ENCODE measurements at regions of chr14 and their contacts with region 1.

Region 1: DNA sequence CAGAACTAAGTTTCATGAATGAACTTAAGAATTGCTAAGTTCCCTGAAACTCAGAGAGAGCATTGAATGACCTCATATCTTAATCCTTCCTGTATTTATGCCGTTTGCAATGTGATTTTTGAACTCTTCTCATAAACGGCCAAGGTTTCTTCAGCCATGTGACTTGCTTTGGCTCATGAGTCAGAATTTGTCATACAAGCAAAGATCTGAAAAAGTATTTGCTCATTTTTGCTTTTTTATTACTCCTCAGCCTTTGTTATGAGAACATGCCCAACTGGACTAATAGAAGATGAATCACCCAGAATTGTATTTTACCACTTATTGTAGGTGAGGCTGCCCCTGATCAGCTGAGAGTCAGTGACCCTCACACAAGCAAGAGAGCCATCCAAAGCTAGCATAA is 693.8 kb downstream of the BCL11B start:
- DNase-seq: peak; percentile 94
- H3K4me3 ChIP-seq: no peak overlapping the region
- H3K27ac ChIP-seq: peak overlapping the region; percentile 92
- H3K4me1 ChIP-seq: peaks cover 22% of the 10 kb centered on the region
- H3K27me3 ChIP-seq: no peaks in the 10 kb centered on the region
- CTCF ChIP-seq: no peak

Region 2: GRCh38 chr14:98138666-98139065 is 439.5 kb before region 1 on chr14:
- CTCF ChIA-PET with region 1: no interaction called
- dilution Hi-C with region 1: no loop called
- in situ Hi-C with region 1: no loop called
- intact Hi-C with region 1: loop called (anchors 10 kb)
- DNase-seq: peak; percentile 25
- H3K4me3 ChIP-seq: no peak overlapping the region
- H3K27ac ChIP-seq: no peak overlapping the region
- H3K4me1 ChIP-seq: peaks cover 4% of the 10 kb centered on the region
- H3K27me3 ChIP-seq: no peaks in the 10 kb centered on the region
- CTCF ChIP-seq: peak; percentile 49 to 82

Region 3: DNA sequence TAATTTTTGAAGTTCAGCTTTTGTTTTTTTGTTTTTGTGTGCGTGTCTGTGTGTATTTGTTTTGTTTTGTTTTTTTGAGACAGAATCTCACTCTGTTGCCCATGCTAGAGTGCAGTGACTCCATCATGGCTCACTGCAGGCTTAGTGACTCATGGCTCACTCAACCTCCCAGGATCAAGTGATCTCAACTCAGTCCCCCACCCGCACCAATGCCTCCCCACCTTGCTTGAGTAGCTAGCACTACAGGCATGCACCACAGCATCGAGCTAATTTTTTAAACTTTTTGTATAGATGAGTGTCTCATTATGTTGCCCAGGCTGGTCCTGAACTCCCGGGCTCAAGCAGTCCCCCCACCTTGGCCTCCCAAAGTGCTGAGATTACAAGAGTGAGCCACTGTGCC is 287.6 kb before region 1 on chr14:
- CTCF ChIA-PET with region 1: no interaction called
- dilution Hi-C with region 1: no loop called
- in situ Hi-C with region 1: no loop called
- intact Hi-C with region 1: loop called (anchors 1 kb)
- DNase-seq: peak; percentile 75
- H3K4me3 ChIP-seq: no peak overlapping the region
- H3K27ac ChIP-seq: no peak overlapping the region
- H3K4me1 ChIP-seq: peaks cover 8% of the 10 kb centered on the region
- H3K27me3 ChIP-seq: no peaks in the 10 kb centered on the region
- CTCF ChIP-seq: no peak

Region 4: GRCh38 chr14:98494582-98494981 is 83.6 kb before region 1 on chr14:
- CTCF ChIA-PET with region 1: no interaction called
- dilution Hi-C with region 1: no loop called
- in situ Hi-C with region 1: no loop called
- intact Hi-C with region 1: loop called (anchors 2 kb)
- DNase-seq: peak; percentile 94
- H3K4me3 ChIP-seq: no peak overlapping the region
- H3K27ac ChIP-seq: peak overlapping the region; percentile 87
- H3K4me1 ChIP-seq: peaks cover 39% of the 10 kb centered on the region
- H3K27me3 ChIP-seq: no peaks in the 10 kb centered on the region
- CTCF ChIP-seq: peak in 1 of 2 donors; percentile 23

Region 5: DNA sequence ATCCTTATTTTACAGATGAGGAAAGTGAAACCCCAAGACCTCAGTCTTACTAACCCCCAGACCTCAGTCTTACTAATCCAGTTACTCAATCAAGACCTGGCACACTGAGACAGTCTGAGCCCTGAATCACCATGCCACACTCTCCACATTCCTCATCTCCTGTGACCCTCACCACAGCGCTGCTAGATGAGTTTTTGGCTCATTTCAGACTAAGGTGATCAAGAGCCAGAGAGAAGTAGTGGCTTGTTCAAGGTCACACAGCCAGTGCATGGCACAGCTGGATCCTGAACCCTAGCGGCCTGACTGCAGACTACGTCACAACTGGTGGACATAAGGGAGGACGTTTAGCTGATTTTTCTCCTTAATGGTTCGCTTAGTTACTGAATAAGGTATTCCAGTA is 114.7 kb after region 1 on chr14:
- CTCF ChIA-PET with region 1: no interaction called
- dilution Hi-C with region 1: no loop called
- in situ Hi-C with region 1: no loop called
- intact Hi-C with region 1: no loop called
- DNase-seq: peak; percentile 41
- H3K4me3 ChIP-seq: no peak overlapping the region
- H3K27ac ChIP-seq: no peak overlapping the region
- H3K4me1 ChIP-seq: no peaks in the 10 kb centered on the region
- H3K27me3 ChIP-seq: no peaks in the 10 kb centered on the region
- CTCF ChIP-seq: no peak

Region 6: DNA sequence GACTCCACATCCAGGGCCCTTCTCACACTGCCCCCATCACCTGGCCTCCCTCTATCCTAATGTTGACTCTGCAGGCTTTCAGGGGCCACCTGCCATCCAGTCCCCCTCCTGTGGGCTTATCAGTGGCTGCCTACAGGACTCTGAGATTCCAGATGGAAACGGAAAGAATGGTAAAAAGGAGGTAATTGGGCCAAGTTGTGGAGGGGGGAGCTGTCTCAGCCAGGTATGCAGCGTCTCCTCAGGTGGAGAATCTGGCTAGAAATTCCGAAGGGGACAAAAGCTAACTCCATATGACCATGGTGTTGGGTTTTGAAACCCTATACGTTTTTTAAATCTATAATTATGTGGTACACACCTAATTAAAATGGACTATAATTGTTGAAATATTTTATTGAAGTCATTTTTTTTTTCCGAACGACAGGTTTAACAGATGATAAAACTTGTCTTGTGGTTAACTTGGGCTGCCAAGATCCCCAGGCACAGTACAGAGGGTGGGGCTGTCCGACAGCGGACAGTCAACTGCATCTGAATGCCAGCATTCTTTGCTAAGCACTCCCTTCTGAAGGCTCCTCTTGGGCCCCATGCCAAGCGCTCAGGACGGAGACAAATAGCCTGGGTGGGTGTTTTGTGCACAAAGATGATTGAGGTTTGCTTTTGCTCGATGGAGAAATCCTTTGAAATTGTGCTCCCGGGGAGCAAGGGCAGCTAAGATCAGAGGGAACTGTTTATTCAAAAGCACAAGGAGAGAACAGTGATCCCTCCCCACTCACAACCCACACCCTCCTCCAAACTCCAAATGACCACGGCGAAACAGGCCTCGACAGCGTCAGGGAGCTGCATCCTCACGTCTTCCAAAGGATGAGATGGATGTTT is 328.2 kb after region 1 on chr14:
- CTCF ChIA-PET with region 1: no interaction called
- dilution Hi-C with region 1: no loop called
- in situ Hi-C with region 1: no loop called
- intact Hi-C with region 1: loop called (anchors 1 kb)
- DNase-seq: peak; percentile 93
- H3K4me3 ChIP-seq: no peak overlapping the region
- H3K27ac ChIP-seq: peak overlapping the region; percentile 68
- H3K4me1 ChIP-seq: peaks cover 72% of the 10 kb centered on the region
- H3K27me3 ChIP-seq: no peaks in the 10 kb centered on the region
- CTCF ChIP-seq: no peak

Region 7: GRCh38 chr14:98953551-98954348 is 375.5 kb after region 1 on chr14:
- CTCF ChIA-PET with region 1: no interaction called
- dilution Hi-C with region 1: no loop called
- in situ Hi-C with region 1: no loop called
- intact Hi-C with region 1: loop called (anchors 1 kb)
- DNase-seq: peak; percentile 91
- H3K4me3 ChIP-seq: no peak overlapping the region
- H3K27ac ChIP-seq: no peak overlapping the region
- H3K4me1 ChIP-seq: peaks cover 39% of the 10 kb centered on the region
- H3K27me3 ChIP-seq: no peaks in the 10 kb centered on the region
- CTCF ChIP-seq: no peak